ENCODE measurements at regions of chr1 and their contacts with region 1.

Region 1: DNA sequence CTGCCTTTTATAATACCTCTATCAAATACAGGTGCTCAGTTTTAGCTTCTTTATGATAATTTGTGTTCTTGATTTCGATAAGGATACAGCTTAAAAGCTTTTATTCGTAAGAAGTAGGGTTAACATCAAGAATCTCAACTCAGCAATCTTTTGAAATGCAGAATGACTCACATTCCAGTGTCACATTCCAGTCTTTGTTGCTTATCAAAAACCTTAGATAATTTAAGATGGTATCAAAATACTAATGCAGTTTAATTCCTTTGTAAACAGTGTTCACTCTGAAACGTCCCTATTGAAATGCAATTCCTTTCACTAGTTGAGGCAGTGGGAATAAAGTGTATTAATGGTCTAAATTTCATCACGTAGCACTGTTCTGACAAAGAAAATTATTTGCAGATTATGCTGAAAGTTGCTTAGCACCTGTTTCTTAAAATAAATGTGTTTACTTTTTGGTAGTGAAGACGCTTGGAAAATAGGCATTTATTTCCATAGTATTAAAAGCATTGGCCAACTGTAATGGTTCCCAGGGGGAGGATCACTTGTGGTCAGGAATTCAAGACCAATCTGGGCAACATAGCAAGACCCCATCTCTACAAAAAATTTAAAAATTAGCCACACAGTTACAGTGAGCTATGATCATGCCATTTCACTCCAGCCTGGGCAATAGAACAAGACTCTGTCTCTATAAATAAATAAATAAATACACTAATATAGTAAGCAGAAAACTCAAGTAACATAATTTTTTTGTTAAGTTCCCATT is 10.1 kb upstream of the CNN3 start:
- DNase-seq: no peak
- ATAC-seq: no peak
- H3K4me3 ChIP-seq: no peak overlapping the region
- H3K27ac ChIP-seq: no peak overlapping the region
- H3K4me1 ChIP-seq: peaks cover 7% of the 10 kb centered on the region; the same call in 1 of the 2 replicates
- H3K27me3 ChIP-seq: no peaks in the 10 kb centered on the region
- CTCF ChIP-seq: no peak

Region 2: DNA sequence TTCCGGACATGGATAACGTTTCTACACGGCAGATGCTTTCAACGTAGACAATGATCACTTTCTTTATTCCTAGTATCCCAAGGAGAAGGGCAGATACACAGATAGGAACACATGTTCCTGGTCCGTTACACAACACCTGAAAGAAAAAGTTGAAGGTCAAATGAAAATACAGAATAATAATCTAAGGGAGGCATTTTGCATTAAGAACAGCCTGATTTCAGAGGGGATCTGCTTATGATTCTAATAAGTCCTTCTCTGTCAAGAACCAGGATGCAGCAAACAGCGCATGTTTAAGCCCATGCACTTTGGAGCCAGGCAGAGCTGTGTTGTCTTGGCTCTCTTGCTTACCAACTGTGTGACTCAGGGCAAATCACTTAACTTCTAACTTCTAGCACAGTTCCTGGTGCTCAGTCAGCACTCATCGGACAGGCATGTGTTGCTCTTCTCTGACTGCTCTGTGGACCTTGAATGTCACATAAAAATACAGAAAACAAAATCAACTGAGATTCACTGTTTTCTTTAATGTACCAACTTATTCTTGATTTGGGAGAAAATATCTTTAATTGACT is 46.2 kb after region 1 on chr1:
- CTCF ChIA-PET with region 1: no interaction called
- POLR2A ChIA-PET with region 1: no interaction called
- intact Hi-C with region 1: loop called (anchors 5 kb)
- DNase-seq: peak; percentile 86
- ATAC-seq: peak; percentile 99
- H3K4me3 ChIP-seq: no peak overlapping the region
- H3K27ac ChIP-seq: peak overlapping the region; percentile 8; the same call in 1 of the 2 replicates
- H3K4me1 ChIP-seq: peaks cover 19% of the 10 kb centered on the region
- H3K27me3 ChIP-seq: no peaks in the 10 kb centered on the region
- CTCF ChIP-seq: no peak